Common myeloid progenitor, CD34-positive (primary cell): ENCODE measurements at regions of chr4 and their contacts with region 1.

Region 1: DNA sequence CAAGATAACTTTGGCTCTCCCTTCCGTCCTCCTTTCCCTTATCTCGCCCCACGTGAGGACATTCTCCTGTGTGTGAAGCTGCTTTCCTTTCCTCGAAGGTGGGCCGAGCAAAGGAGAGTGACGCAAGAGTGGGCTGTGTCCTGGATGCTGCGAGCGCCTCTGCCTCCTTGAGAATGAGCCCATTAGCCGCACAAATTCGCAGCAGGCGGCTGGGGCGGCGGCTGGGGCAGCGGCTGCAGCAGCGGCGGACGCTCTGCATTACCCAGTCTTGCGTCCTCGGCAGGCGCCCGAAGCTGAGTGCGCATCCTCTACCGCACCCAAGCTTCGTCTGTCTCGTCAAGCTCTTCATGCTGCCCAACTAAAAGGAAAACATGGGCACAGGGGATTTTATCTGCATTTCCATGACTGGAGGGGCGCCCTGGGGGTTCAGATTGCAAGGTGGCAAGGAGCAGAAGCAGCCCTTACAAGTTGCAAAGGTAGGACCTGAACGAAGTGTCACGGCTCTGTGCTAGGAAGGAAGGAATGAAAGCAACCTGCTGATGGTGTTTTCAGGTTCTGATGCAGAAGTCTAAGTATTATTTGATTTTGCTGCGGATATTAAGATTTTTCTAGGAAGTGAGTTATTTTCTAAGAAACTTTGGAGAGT is at the start of gene SYNPO2:
- DNase-seq: peak; percentile 38 to 72 (median 60)
- H3K4me3 ChIP-seq: peak within 1 kb of the TSS; percentile 7 to 80 (median 61)
- H3K27ac ChIP-seq: no peak within 1 kb of the TSS
- H3K4me1 ChIP-seq: peaks cover 0 to 13% (median 7%) of the 10 kb centered on the region in 4 experiments
- H3K27me3 ChIP-seq: peaks cover 0 to 16% (median 12%) of the 10 kb centered on the region in 5 experiments

Region 2: GRCh38 chr4:118772081-118772766 is 116.6 kb before region 1 on chr4:
- CTCF ChIA-PET with region 1: interaction called, 25 read pairs
- POLR2A ChIA-PET with region 1: no interaction called
- DNase-seq: peak; percentile 60 to 80 (median 73)
- H3K4me3 ChIP-seq: no peak overlapping the region
- H3K27ac ChIP-seq: no peak overlapping the region
- H3K4me1 ChIP-seq: no peaks in the 10 kb centered on the region
- H3K27me3 ChIP-seq: no peaks in the 10 kb centered on the region

Region 3: GRCh38 chr4:119151161-119151560 is 262.4 kb after region 1 on chr4:
- CTCF ChIA-PET with region 1: no interaction called
- POLR2A ChIA-PET with region 1: no interaction called
- DNase-seq: no peak
- H3K4me3 ChIP-seq: no peak overlapping the region
- H3K27ac ChIP-seq: no peak overlapping the region
- H3K4me1 ChIP-seq: no peaks in the 10 kb centered on the region
- H3K27me3 ChIP-seq: no peaks in the 10 kb centered on the region